Activated CD4-positive, alpha-beta T cell treated with anti-CD3 and anti-CD28 coated beads, Interleukin-2, amount 10 ng/mL, durations not matched to agents 7 days and 5 days (primary cell): ENCODE measurements at regions of chr1 and their contacts with region 1.

Region 1: GRCh38 chr1:111481387-111482221 is 7.8 kb downstream of the C1orf162 start:
- DNase-seq: peak; percentile 68
- H3K4me3 Mint-ChIP-seq: no peak overlapping the region
- H3K27ac Mint-ChIP-seq: no peak overlapping the region
- H3K4me1 Mint-ChIP-seq: peaks cover 42% of the 10 kb centered on the region
- H3K27me3 Mint-ChIP-seq: peaks cover 3% of the 10 kb centered on the region

Region 2: DNA sequence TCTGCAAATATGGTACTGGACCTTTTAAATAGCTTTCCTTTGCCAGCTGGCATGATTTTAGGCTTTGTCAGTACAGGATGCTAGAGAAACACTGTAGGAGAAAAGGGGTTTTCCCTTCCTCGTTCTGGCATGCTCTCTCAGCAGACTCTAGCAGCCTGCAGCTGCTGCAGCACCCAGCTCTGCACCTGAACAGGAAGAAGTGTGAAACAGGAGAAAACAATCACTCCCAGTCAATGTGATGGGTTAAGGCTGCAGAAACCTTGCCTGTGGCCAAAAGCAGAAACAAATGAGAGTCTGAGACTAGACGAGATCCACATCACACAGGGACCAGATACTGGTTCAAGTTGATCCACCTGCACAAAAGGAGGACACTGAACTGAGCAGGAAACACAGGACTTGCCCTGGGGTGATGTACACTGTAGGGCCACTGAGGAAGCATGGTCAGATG is 75.3 kb before region 1 on chr1:
- CTCF ChIA-PET with region 1: no interaction called
- POLR2A ChIA-PET with region 1: no interaction called
- DNase-seq: peak; percentile 70
- H3K4me3 Mint-ChIP-seq: no peak overlapping the region
- H3K27ac Mint-ChIP-seq: peak overlapping the region; percentile 55
- H3K4me1 Mint-ChIP-seq: peaks cover 31% of the 10 kb centered on the region
- H3K27me3 Mint-ChIP-seq: no peaks in the 10 kb centered on the region

Region 3: DNA sequence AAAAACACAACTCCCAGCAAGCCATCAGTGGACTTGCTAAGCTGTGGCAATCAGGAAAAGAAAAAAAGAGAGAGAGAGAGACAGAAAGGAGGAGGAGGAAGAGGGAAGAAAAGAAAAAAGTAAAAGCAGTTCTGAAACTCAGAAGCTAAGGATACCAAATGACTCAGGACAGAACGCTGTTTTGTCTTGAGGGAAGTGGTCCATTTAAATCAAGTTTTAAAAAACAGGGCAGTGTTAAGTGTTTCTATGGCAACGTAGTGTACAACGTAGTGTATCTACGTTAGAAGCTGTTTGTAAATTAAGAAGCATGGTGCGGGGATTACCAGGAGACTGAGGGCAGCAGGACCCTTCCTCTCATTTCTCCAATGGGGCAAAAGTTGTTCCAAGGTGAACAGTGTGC is 16.0 kb after region 1 on chr1:
- CTCF ChIA-PET with region 1: interaction called, 10 read pairs
- POLR2A ChIA-PET with region 1: no interaction called
- DNase-seq: no peak
- H3K4me3 Mint-ChIP-seq: no peak overlapping the region
- H3K27ac Mint-ChIP-seq: no peak overlapping the region
- H3K4me1 Mint-ChIP-seq: peaks cover 29% of the 10 kb centered on the region
- H3K27me3 Mint-ChIP-seq: no peaks in the 10 kb centered on the region

Region 4: DNA sequence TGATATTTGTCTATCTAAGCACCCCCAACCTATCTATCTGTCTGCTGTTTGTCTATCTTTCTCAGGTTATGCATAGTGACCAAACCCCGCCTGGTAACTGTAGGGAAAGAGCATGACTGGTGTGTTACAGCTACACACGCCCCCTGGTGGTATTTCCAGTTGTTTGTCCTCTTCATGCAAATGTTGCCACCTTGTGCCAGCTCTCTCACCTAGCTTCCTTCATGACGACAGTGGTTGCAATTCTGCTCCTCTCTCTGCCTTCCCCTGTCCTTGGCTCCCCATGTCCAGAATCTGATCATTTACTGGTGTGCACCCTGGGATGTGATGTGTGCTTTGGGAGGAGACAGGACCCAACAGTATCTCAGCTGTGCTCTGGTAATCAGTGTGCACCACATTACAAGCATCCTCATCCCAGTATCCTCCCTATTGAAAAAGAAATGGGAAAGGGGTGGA is 265.7 kb after region 1 on chr1:
- CTCF ChIA-PET with region 1: interaction called, 10 read pairs
- POLR2A ChIA-PET with region 1: no interaction called
- DNase-seq: peak; percentile 87
- H3K4me3 Mint-ChIP-seq: no peak overlapping the region
- H3K27ac Mint-ChIP-seq: no peak overlapping the region
- H3K4me1 Mint-ChIP-seq: peaks cover 14% of the 10 kb centered on the region
- H3K27me3 Mint-ChIP-seq: peaks cover 17% of the 10 kb centered on the region